Activated CD4-positive, alpha-beta T cell treated with anti-CD3 and anti-CD28 coated beads, Interleukin-2, amount 10 ng/mL, durations not matched to agents 24 days and 14 days (primary cell): ENCODE measurements at regions of chr6 and their contacts with region 1.

Region 1: DNA sequence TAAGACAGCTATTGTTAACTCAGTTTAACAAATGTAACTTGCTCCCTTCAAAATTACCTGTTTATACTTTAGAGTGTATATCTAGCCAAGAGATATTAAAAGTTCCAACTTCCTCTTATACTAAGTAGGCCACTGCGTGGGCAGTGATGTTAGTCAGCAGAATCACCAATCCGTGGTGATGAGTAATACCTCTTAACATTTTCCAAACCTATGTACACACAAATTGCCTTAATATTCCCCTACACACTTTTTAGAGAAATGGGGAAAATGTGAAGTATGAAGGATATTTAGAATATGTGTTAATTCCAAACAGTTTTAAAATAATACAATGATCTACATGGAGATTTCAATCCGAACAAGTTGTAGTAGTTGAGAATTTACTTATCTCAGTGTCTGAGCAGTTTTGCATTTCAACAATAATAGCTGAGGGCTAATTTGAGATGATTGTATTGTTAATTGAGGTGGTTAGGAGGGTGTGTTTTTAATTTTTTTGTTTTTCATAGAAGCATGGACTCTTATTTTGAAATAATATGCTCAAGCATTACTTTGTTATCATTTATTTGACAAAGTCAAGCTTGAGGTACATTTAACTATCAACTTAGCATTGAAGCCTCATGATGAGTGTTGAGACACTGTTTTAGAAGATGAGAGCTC is 1111.8 kb upstream of the CITED2 start:
- DNase-seq: no peak
- H3K4me3 Mint-ChIP-seq: no peak overlapping the region
- H3K27ac Mint-ChIP-seq: peak overlapping the region; percentile 62
- H3K4me1 Mint-ChIP-seq: peaks cover 10% of the 10 kb centered on the region
- H3K27me3 Mint-ChIP-seq: no peaks in the 10 kb centered on the region

Region 2: DNA sequence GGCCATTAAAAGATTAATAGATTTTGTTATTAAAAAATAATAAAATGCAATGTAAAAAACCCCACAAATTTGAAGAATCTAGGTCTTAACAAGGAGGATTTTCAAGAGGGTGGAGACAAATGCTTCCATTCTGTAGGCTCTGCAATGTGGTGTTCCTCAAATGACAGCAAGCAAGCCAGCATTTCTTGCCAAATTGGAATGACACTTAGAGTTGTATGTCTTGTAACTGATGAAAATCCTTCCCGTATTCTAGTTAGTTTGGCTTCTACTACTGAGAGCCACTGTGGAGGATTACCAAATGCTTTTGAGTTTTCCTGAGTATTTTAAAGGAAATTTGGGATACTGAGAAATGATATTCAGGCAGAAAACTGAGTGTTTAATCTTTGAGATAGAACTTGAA is 113.7 kb after region 1 on chr6:
- intact Hi-C with region 1: loop called (anchors 5 kb)
- DNase-seq: no peak
- H3K4me3 Mint-ChIP-seq: no peak overlapping the region
- H3K27ac Mint-ChIP-seq: no peak overlapping the region
- H3K4me1 Mint-ChIP-seq: peaks cover 12% of the 10 kb centered on the region
- H3K27me3 Mint-ChIP-seq: peaks cover 5% of the 10 kb centered on the region